ENCODE measurements at regions of chr5 and their contacts with region 1.

Region 1: GRCh38 chr5:168701641-168702040 is 122.5 kb upstream of the PANK3 start:
- DNase-seq: no peak
- ATAC-seq: no peak
- H3K4me3 ChIP-seq: no peak overlapping the region
- H3K27ac ChIP-seq: no peak overlapping the region
- H3K4me1 ChIP-seq: peaks cover 0 to 32% (median 11%) of the 10 kb centered on the region in 12 donors
- H3K27me3 ChIP-seq: no peaks in the 10 kb centered on the region
- CTCF ChIP-seq: no peak
- POLR2A ChIP-seq: no peak

Region 2: GRCh38 chr5:168947212-168947868 is 245.7 kb after region 1 on chr5:
- intact Hi-C with region 1: loop called in 5 of 10 experiments (anchors 5 to 10 kb)
- DNase-seq: peak in 3 of 5 donors; percentile 18 to 37 (median 35)
- ATAC-seq: peak in 3 of 4 donors; percentile 39 to 75 (median 67)
- H3K4me3 ChIP-seq: no peak overlapping the region
- H3K27ac ChIP-seq: no peak overlapping the region
- H3K4me1 ChIP-seq: peaks cover 0 to 8% (median 0%) of the 10 kb centered on the region in 12 donors
- H3K27me3 ChIP-seq: no peaks in the 10 kb centered on the region
- CTCF ChIP-seq: peak; percentile 52 to 75 (median 61)
- POLR2A ChIP-seq: no peak

Region 3: DNA sequence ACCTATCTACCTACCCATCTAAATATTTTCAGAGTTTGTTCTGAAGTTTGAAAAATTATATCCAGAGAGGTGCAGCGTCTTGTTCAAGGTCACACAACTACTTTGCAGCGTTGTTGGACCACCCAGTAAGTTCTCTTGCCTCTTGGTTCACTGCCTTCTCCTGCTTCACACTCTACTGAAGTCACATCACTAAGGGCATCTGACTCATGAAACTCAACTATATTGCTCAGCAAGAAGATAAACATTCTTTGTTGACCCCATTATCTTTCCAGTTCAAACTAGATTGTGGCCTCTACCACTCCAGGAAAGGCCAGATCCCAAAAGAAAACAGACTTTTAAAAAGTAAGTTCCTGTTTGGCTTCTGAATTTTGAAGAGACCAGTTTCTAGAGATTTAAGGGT is 272.4 kb after region 1 on chr5:
- intact Hi-C with region 1: no loop called
- DNase-seq: no peak
- ATAC-seq: no peak
- H3K4me3 ChIP-seq: no peak overlapping the region
- H3K27ac ChIP-seq: no peak overlapping the region
- H3K4me1 ChIP-seq: peaks cover 0 to 8% (median 0%) of the 10 kb centered on the region in 12 donors
- H3K27me3 ChIP-seq: no peaks in the 10 kb centered on the region
- CTCF ChIP-seq: no peak
- POLR2A ChIP-seq: no peak